ENCODE measurements at regions of chr18 and their contacts with region 1.

Region 1: DNA sequence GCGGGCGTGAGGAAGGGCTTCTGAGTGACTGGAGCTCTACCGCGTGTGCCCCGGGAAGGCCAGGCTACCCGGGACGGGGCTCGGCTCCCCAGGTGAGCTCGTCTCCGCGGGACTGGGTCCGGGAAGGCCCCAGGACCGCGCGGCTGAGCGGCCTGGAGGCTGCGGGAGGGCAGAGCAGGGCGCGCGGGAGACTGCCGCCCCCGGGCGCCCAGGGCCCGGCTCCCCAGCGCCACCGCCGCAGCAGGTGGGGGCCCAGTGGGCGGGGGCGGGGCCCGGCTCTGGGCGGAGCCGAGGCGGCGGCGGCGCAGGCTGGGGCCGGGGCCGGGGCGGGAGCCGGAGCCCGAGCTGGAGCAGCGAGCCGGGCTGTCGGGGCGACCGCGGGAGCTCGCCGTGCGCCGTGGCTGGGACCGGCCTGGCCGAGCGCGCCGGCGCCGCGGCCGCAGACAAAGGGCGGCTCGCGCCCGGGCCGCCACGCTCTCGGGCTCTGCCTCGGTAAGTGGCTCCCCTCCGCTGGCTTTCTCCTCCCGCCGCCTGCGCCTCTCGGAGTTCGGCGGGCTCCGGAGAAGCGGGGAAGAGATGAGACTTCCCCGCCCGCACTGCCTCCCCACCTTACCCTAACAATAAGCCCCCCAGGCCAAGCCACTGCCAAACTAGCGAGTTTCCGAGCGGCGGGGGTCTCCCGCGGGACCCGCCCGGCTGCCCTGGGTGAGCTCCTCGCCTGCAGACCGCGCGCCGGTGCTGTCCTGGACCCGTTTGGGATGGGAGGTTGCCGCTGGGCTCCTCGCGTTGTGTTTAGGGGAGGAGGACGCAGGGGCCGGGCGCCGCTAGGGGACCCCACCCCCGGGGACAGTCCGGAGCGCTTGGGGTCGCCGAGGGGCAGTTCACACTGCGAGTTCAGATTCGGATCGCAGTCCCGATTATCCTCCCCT is at the start of gene MAPK4:
- DNase-seq: peak; percentile 51 to 72
- ATAC-seq: peak; percentile 88 to 94 (median 92)
- H3K4me3 ChIP-seq: peak within 1 kb of the TSS; percentile 70
- H3K27ac ChIP-seq: peak within 1 kb of the TSS; percentile 65
- H3K4me1 ChIP-seq: peaks cover 7% of the 10 kb centered on the region
- H3K27me3 ChIP-seq: peaks cover 0 to 12% (median 0%) of the 10 kb centered on the region in 3 donors
- CTCF ChIP-seq: no peak
- total RNA-seq, gene MAPK4: 0.57 to 1.8 (median 1.1) TPM

Region 2: DNA sequence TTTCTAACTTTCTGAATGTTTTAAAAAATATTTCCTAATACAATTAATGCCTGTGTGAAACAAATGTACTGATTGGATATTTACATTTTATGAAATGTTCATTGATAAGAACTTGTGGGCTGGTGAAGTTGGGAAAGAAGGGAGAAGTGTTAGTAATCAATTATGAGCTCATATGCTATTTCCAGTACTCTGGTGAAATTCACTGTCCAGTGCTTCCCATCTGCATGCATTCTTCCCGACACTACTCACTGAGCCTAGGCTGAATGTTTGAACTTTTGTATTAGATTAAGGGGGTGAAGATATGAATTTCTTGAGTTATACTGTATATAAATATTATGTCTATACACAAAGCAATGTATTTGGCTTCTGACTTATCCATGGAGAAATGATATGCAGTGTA is 149.1 kb before region 1 on chr18:
- intact Hi-C with region 1: no loop called
- DNase-seq: no peak
- ATAC-seq: peak in 1 of 4 donors; percentile 36
- H3K4me3 ChIP-seq: no peak overlapping the region
- H3K27ac ChIP-seq: no peak overlapping the region
- H3K4me1 ChIP-seq: no peaks in the 10 kb centered on the region
- H3K27me3 ChIP-seq: peaks cover 0 to 15% (median 0%) of the 10 kb centered on the region in 3 donors
- CTCF ChIP-seq: no peak

Region 3: DNA sequence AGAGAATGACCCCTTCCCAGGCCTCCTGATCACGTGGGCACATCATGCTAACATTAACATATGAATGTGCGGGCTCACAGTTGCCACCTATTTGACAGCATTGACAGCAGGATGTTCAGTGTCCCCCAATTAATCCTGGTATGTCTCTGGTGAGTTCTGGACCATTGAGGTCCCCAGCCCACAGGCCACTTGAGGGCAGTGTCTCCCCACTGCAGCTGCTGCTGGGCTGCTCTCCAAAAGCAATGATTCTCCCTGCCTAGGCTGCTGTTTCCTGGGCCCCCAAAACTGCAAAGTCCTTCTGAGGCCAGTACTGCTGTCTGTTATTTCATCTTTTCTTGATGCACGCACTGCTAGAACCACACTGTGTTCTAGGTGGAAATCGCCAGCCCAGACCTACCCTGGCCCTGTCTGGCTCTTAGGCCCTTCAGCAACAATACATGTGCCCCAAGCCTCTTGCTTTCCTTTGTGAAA is 52.9 kb before region 1 on chr18:
- intact Hi-C with region 1: loop called in 1 of 2 experiments (anchors 5 kb)
- DNase-seq: peak; percentile 26 to 63
- ATAC-seq: peak; percentile 62 to 90 (median 88)
- H3K4me3 ChIP-seq: no peak overlapping the region
- H3K27ac ChIP-seq: no peak overlapping the region
- H3K4me1 ChIP-seq: no peaks in the 10 kb centered on the region
- H3K27me3 ChIP-seq: no peaks in the 10 kb centered on the region
- CTCF ChIP-seq: peak; percentile 65

Region 4: GRCh38 chr18:50610349-50610748 is 50.3 kb after region 1 on chr18:
- intact Hi-C with region 1: no loop called
- DNase-seq: no peak
- ATAC-seq: no peak
- H3K4me3 ChIP-seq: no peak overlapping the region
- H3K27ac ChIP-seq: no peak overlapping the region
- H3K4me1 ChIP-seq: no peaks in the 10 kb centered on the region
- H3K27me3 ChIP-seq: no peaks in the 10 kb centered on the region
- CTCF ChIP-seq: no peak

Region 5: DNA sequence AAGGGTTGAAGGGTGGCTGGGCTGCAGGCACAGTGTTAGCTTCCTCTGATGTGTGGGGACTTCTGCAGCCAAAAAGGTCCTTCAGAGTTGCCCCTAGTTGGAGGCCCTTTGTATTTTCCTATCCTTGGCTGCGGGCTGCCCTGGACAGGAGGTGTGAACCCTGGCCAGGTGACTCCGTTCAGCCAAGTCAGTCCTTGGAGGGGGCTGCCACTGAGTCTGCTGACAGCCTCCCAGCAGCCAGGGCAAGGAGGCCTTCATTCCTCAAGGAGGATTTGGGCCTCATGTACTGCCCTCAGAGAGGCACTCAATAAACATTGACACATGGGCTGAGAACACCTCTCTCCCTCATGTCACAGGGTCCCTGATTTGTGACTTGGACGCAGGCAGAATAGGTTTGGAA is 62.3 kb after region 1 on chr18:
- intact Hi-C with region 1: no loop called
- DNase-seq: no peak
- ATAC-seq: no peak
- H3K4me3 ChIP-seq: no peak overlapping the region
- H3K27ac ChIP-seq: no peak overlapping the region
- H3K4me1 ChIP-seq: no peaks in the 10 kb centered on the region
- H3K27me3 ChIP-seq: no peaks in the 10 kb centered on the region
- CTCF ChIP-seq: no peak

Region 6: DNA sequence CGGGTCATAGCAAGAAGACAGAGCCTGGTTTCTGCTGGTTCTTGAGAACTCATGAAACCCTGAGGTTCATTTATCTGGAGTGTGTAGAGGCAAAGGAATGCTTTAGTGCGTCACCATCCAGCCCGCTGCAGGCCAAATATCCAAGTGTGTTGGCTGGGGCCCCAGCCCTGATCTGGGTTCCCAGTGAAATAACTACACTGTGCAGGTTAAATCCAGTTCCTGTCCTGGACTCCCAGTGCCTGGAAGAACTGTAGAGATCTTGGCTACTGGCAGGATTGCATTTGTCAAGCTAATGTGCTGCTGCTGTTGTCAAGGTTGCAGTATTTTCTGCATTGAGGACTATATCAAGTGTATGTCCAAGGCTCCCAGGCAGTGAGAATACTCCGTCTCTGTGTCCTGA is 89.8 kb after region 1 on chr18:
- intact Hi-C with region 1: loop called in 1 of 2 experiments (anchors 5 kb)
- DNase-seq: peak; percentile 43 to 60
- ATAC-seq: peak; percentile 58 to 78 (median 66)
- H3K4me3 ChIP-seq: no peak overlapping the region
- H3K27ac ChIP-seq: no peak overlapping the region
- H3K4me1 ChIP-seq: peaks cover 9% of the 10 kb centered on the region
- H3K27me3 ChIP-seq: no peaks in the 10 kb centered on the region
- CTCF ChIP-seq: no peak

Region 7: DNA sequence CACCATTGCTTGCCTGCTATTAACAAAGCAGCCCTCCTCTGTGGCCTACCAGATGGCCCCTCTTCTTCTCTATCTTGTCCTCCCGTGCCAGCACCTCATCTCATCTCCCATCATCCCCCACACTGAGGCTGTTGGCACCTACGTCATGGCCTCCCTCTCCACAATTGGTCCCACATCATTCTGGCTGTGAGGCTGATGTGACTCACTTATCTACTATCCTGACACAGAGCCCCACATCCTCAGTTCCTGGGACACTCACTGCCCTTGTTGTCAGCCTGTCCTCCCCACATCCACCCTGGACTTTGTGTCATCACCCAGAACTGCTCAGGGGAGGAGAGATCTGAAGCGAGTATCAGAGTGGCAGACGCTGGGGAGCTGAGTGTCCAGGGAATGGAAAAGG is 156.9 kb after region 1 on chr18:
- intact Hi-C with region 1: no loop called
- DNase-seq: no peak
- ATAC-seq: no peak
- H3K4me3 ChIP-seq: no peak overlapping the region
- H3K27ac ChIP-seq: no peak overlapping the region
- H3K4me1 ChIP-seq: no peaks in the 10 kb centered on the region
- H3K27me3 ChIP-seq: no peaks in the 10 kb centered on the region
- CTCF ChIP-seq: no peak